ENCODE measurements at regions of chr18 and their contacts with region 1.

Region 1: GRCh38 chr18:24600076-24600654 is 139.7 kb downstream of the HRH4 start:
- DNase-seq: peak in 2 of 4 donors; percentile 65 to 78
- ATAC-seq: peak; percentile 67
- H3K4me3 ChIP-seq: no peak overlapping the region
- H3K27ac ChIP-seq: no peak overlapping the region
- H3K4me1 ChIP-seq: no peaks in the 10 kb centered on the region
- H3K27me3 ChIP-seq: no peaks in the 10 kb centered on the region
- CTCF ChIP-seq: peak; percentile 33 to 71

Region 2: GRCh38 chr18:24538414-24539264 is 61.5 kb before region 1 on chr18:
- intact Hi-C with region 1: no loop called
- DNase-seq: no peak
- ATAC-seq: no peak
- H3K4me3 ChIP-seq: no peak overlapping the region
- H3K27ac ChIP-seq: no peak overlapping the region
- H3K4me1 ChIP-seq: no peaks in the 10 kb centered on the region
- H3K27me3 ChIP-seq: peaks cover 0 to 2% of the 10 kb centered on the region in 2 donors
- CTCF ChIP-seq: no peak

Region 3: DNA sequence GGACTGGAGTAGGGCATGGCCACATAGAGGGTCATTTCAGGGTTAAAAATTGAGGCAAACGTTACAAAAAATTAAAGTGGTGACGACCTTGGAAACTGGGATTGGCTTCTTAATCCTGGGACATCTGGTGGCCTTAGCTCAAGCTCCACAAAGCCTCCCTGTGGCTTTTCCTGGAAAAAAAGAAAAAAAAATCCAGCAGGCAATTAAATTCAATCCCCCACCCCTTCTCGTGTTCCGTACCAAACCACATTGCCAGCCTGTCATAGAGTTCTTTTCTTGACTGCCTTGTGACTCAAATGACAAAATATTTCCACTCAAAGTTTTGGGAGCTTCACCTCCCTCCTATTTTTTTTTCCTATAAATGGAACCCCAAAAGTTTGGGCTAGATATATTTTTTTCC is 55.9 kb after region 1 on chr18:
- intact Hi-C with region 1: no loop called
- DNase-seq: no peak
- ATAC-seq: no peak
- H3K4me3 ChIP-seq: no peak overlapping the region
- H3K27ac ChIP-seq: no peak overlapping the region
- H3K4me1 ChIP-seq: peaks cover 4 to 13% of the 10 kb centered on the region in 2 donors
- H3K27me3 ChIP-seq: no peaks in the 10 kb centered on the region
- CTCF ChIP-seq: no peak

Region 4: GRCh38 chr18:24726727-24727492 is 126.7 kb after region 1 on chr18:
- intact Hi-C with region 1: loop called in 1 of 2 experiments (anchors 5 kb)
- DNase-seq: peak in 3 of 4 donors; percentile 52 to 88 (median 79)
- ATAC-seq: peak; percentile 90
- H3K4me3 ChIP-seq: no peak overlapping the region
- H3K27ac ChIP-seq: no peak overlapping the region
- H3K4me1 ChIP-seq: no peaks in the 10 kb centered on the region
- H3K27me3 ChIP-seq: no peaks in the 10 kb centered on the region
- CTCF ChIP-seq: peak; percentile 55 to 79

Measured in left lung (tissue), 14 donors.